PC-9 (cell line): ENCODE measurements at regions of chr12 and their contacts with region 1.

Region 1: DNA sequence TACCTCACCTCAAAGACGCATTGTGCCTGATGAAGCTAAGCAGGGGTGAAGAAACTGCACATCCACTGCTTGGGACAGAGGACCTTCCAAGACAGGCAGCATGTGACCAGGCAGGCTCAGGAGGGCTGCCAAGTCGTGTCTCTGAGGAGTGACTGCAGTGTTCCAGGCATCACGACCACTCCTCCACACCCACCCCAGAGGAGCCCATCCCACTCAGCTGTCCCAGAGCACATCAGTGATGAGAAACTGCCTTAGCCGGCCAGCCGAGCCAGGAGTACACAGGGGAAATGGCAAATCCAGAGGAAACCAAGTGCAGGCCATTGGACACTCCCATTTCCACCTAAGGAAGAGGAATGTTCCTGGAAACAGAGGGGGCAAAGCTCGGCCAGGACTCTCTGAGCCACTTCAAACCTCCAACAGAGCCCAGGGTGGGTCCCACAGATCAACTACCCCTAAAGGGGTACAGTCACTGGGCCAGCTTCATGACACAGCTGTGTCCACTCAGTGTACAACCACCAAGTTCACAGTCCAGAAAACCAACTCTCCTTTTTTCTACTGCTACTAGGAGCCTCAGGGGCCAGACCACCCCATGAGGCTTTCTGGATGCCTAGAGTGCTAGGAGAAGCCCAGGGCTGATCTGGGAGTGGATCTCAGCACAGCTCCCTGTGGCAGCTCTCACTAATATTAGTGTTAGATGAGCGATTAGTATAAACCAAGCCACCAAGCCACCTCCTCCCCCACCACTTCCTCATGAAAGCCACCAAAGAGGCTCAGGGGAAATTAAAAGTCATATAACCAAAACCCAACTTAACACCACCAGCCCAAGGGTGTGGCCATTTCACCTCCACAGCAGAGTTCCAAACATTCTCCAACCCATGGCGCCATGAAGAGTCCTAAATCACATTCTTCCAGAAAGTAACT is 15.4 kb downstream of the PXN start:
- DNase-seq: no peak
- H3K4me3 ChIP-seq: no peak overlapping the region
- H3K27ac ChIP-seq: no peak overlapping the region
- H3K4me1 ChIP-seq: peaks cover 12% of the 10 kb centered on the region
- H3K27me3 ChIP-seq: no peaks in the 10 kb centered on the region
- CTCF ChIP-seq: no peak

Region 2: GRCh38 chr12:120228291-120229070 is 21.7 kb before region 1 on chr12:
- CTCF ChIA-PET with region 1: interaction called, 6 read pairs
- POLR2A ChIA-PET with region 1: interaction called, 11 read pairs
- intact Hi-C with region 1: no loop called
- DNase-seq: peak; percentile 80 to 92
- H3K4me3 ChIP-seq: peak overlapping the region; percentile 54; the same call in 1 of the 2 replicates
- H3K27ac ChIP-seq: peak overlapping the region; percentile 99
- H3K4me1 ChIP-seq: peaks cover 53% of the 10 kb centered on the region
- H3K27me3 ChIP-seq: no peaks in the 10 kb centered on the region
- CTCF ChIP-seq: peak; percentile 81

Region 3: DNA sequence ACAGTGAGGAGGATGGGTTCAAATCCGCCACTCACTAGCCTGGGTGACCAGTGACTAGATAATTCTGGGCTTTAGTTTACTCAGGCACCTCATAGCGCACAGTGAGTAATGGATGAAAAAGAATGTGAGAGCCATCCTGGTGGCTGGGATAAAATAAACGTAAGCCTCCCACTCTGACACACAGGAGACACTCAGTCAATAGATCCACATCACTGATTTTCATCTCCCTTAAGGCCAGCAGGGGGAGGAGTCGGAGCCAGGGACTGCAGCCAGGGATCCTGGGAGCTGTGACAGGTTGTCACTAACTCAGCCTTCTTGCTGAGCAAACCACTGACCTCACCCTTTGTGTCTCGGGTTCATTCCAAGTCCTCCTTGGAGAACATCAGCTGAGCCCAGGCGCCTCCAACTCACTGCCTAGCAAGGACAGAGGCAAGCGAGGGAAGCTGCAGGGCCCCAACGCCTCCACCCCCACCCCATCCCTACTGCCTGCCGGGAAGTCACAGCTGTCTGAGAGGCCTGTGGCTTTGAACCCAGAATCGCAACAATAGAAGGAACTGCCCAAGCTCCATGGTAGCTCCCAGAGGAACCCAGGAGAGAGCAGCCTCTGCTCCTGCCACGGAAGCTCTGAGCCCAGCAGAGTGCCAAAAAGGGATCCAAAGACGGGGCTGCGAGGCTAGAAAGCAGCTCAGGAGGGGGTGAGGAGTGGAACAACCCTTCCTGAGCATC is 15.3 kb before region 1 on chr12:
- CTCF ChIA-PET with region 1: interaction called, 14 read pairs
- POLR2A ChIA-PET with region 1: interaction called, 11 read pairs
- intact Hi-C with region 1: loop called (anchors 1 kb)
- DNase-seq: peak; percentile 79
- H3K4me3 ChIP-seq: no peak overlapping the region
- H3K27ac ChIP-seq: peak overlapping the region; percentile 99; the same call in 1 of the 2 replicates
- H3K4me1 ChIP-seq: peaks cover 59% of the 10 kb centered on the region
- H3K27me3 ChIP-seq: no peaks in the 10 kb centered on the region
- CTCF ChIP-seq: peak; percentile 60

Region 4: GRCh38 chr12:120265473-120266179 is 15.5 kb after region 1 on chr12 and contains the start of gene PXN:
- CTCF ChIA-PET with region 1: interaction called, 7 read pairs
- POLR2A ChIA-PET with region 1: interaction called, 14 read pairs
- intact Hi-C with region 1: no loop called
- DNase-seq: peak; percentile 52 to 92
- H3K4me3 ChIP-seq: peak within 1 kb of the TSS; percentile 76
- H3K27ac ChIP-seq: peak within 1 kb of the TSS; percentile 19
- H3K4me1 ChIP-seq: peaks cover 33% of the 10 kb centered on the region
- H3K27me3 ChIP-seq: no peaks in the 10 kb centered on the region
- CTCF ChIP-seq: peak; percentile 65
- total RNA-seq, gene PXN: 191 and 218 TPM in 2 replicates

Region 5: DNA sequence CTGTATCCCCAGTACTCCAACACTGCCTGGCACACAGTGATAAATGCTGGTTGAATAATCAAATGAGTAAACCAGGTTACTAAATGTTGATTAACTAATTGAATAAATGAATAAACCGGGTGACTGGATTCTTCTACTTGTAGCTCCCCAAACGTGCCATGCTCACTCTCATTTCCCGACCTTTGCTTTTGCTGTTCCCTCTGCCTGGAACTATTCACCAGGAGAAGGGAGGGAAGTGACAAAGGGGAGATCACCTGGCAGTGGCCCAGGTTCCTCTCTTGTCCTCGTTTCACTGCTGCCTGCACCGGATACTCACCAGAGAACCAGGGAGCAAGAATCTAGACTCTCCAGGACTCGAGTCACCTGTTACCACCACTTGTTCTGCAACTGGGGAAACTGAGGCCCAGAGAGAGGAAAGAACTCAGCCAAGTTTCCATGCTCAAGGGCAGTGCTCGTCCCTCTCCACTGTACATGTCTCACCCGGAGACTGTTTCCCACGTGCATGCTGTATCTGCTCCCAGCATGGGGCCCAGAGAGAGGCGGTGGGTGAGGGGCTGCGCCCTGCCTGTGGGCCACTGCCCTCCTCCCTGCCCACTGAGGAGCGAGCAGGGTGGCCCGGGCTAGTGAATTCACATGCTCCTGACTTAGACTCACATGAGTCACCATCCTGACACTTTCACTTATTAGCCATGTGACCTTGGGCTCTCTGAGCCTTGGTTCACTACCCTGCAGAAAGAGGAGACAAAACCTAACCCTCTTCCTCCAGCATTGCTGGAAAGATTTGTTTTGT is 348.7 kb after region 1 on chr12:
- CTCF ChIA-PET with region 1: no interaction called
- POLR2A ChIA-PET with region 1: no interaction called
- intact Hi-C with region 1: no loop called
- DNase-seq: peak; percentile 23 to 65
- H3K4me3 ChIP-seq: no peak overlapping the region
- H3K27ac ChIP-seq: no peak overlapping the region
- H3K4me1 ChIP-seq: peaks cover 26% of the 10 kb centered on the region
- H3K27me3 ChIP-seq: no peaks in the 10 kb centered on the region
- CTCF ChIP-seq: no peak